ENCODE measurements at regions of chr2 and their contacts with region 1.

Region 1: DNA sequence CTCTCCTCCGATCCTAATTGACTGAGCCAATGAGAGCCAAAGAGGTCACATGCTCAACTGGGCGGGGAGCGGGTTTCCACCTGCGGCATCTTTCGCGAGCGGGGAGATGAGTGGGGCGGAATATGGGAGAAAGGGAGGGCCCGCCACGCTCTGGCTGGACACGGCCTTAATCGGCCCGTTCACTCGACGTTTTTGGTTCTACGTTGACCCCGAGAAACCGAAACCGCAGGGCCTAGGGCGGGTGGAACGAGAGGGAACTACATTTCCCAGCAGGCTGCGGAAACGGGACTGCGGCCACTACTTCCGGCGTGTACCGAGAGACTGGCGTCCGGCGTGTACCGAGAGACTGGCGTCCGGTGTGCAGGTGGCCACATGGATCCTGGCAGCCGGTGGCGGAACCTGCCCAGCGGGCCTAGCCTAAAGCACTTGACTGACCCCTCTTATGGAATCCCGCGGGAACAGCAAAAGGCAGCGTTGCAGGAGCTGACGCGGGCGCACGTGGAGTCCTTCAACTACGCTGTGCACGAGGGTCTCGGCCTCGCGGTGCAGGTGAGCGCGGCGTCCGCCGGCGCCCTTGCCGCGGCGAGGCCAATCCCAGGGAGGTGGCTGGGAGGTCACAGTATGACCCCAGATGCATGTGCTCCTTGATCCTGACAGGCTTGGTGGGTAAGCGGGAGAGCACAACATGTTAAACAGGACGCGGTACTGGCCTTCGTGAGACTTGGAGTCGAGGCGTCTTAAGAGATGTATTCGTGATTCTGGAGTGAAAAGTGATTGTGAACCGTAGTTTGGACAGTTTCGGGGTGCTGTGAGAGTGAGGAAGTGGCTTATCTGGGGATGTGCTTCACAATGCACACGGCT is at the start of gene POLR1B:
- DNase-seq: peak in 8 of 9 experiments; percentile 56 to 86 (median 75)
- ATAC-seq: peak; percentile 78
- H3K4me3 ChIP-seq: peak within 1 kb of the TSS; percentile 90
- H3K4me3 Mint-ChIP-seq: no peak within 1 kb of the TSS
- H3K27ac ChIP-seq: peak within 1 kb of the TSS; percentile 90 to 96
- H3K27ac Mint-ChIP-seq: no peak within 1 kb of the TSS
- H3K4me1 ChIP-seq: peaks cover 17% of the 10 kb centered on the region
- H3K4me1 Mint-ChIP-seq: peaks cover 26% of the 10 kb centered on the region
- H3K27me3 ChIP-seq: no peaks in the 10 kb centered on the region
- H3K27me3 Mint-ChIP-seq: no peaks in the 10 kb centered on the region
- CTCF ChIP-seq: no peak
- total RNA-seq, gene POLR1B: 10.0 to 11.0 TPM

Region 2: GRCh38 chr2:111883661-111884591 is 658.4 kb before region 1 on chr2 and contains the start of gene ANAPC1:
- CTCF ChIA-PET with region 1: no interaction called
- POLR2A ChIA-PET with region 1: no interaction called
- intact Hi-C with region 1: loop called (anchors 2 to 5 kb)
- DNase-seq: peak; percentile 69 to 91 (median 86)
- ATAC-seq: peak; percentile 96
- H3K4me3 ChIP-seq: peak within 1 kb of the TSS; percentile 75 to 82
- H3K4me3 Mint-ChIP-seq: peak within 1 kb of the TSS; percentile 96
- H3K27ac ChIP-seq: peak within 1 kb of the TSS; percentile 76 to 81
- H3K27ac Mint-ChIP-seq: peak within 1 kb of the TSS; percentile 98
- H3K4me1 ChIP-seq: peaks cover 8% of the 10 kb centered on the region
- H3K4me1 Mint-ChIP-seq: peaks cover 14% of the 10 kb centered on the region
- H3K27me3 ChIP-seq: no peaks in the 10 kb centered on the region
- H3K27me3 Mint-ChIP-seq: no peaks in the 10 kb centered on the region
- CTCF ChIP-seq: no peak
- total RNA-seq, gene ANAPC1: 39.6 to 43.9 TPM

Region 3: DNA sequence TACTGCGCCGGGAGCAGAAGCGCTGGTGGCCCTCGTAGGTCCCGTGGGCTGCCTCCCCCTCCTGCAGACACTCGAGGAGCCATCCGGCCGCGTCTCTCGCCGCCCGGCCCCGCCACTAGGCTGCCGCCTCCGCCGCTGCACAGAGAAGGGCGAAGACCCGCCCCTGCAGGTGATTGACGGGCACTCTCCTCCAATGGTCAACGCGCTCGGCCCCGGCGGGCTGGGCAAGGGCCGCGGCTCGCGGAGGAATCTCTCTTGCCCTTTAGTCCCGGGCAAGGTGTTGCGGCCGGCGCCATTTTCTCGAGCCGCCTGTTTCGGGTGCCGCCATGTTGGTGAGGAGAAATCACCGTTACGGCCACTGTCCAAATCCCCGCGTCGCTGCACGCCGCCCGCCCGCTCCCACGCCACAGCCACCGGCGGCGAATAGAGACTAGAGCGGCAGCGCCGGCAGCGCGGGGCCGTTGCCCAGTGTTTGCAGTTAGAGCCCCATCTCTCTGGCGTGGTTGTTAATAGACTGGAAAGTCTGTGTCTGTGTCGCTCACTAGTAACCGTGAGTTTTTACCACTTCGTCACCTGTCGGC is 267.0 kb before region 1 on chr2 and contains the start of gene ZC3H6:
- CTCF ChIA-PET with region 1: no interaction called
- POLR2A ChIA-PET with region 1: no interaction called
- intact Hi-C with region 1: loop called (anchors 5 kb)
- DNase-seq: peak; percentile 98 to 100 (median 100)
- ATAC-seq: peak; percentile 90
- H3K4me3 ChIP-seq: peak within 1 kb of the TSS; percentile 74 to 100
- H3K4me3 Mint-ChIP-seq: peak within 1 kb of the TSS; percentile 95
- H3K27ac ChIP-seq: peak within 1 kb of the TSS; percentile 96 to 100
- H3K27ac Mint-ChIP-seq: peak within 1 kb of the TSS; percentile 100
- H3K4me1 ChIP-seq: peaks cover 19% of the 10 kb centered on the region
- H3K4me1 Mint-ChIP-seq: peaks cover 26% of the 10 kb centered on the region
- H3K27me3 ChIP-seq: no peaks in the 10 kb centered on the region
- H3K27me3 Mint-ChIP-seq: no peaks in the 10 kb centered on the region
- CTCF ChIP-seq: peak; percentile 16
- total RNA-seq, gene ZC3H6: 13.7 to 15.1 TPM

Region 4: GRCh38 chr2:112529757-112530156 is 12.6 kb before region 1 on chr2:
- CTCF ChIA-PET with region 1: no interaction called
- POLR2A ChIA-PET with region 1: no interaction called
- intact Hi-C with region 1: no loop called
- DNase-seq: no peak
- ATAC-seq: no peak
- H3K4me3 ChIP-seq: no peak overlapping the region
- H3K4me3 Mint-ChIP-seq: no peak overlapping the region
- H3K27ac ChIP-seq: no peak overlapping the region
- H3K27ac Mint-ChIP-seq: no peak overlapping the region
- H3K4me1 ChIP-seq: no peaks in the 10 kb centered on the region
- H3K4me1 Mint-ChIP-seq: no peaks in the 10 kb centered on the region
- H3K27me3 ChIP-seq: no peaks in the 10 kb centered on the region
- H3K27me3 Mint-ChIP-seq: no peaks in the 10 kb centered on the region
- CTCF ChIP-seq: no peak

Region 5: GRCh38 chr2:112584134-112584890 is 42.0 kb after region 1 on chr2 and contains the start of gene CHCHD5:
- CTCF ChIA-PET with region 1: no interaction called
- POLR2A ChIA-PET with region 1: no interaction called
- intact Hi-C with region 1: loop called (anchors 1 kb)
- DNase-seq: peak; percentile 85 to 97 (median 92)
- ATAC-seq: peak; percentile 84
- H3K4me3 ChIP-seq: peak within 1 kb of the TSS; percentile 79 to 96
- H3K4me3 Mint-ChIP-seq: peak within 1 kb of the TSS; percentile 95
- H3K27ac ChIP-seq: peak within 1 kb of the TSS; percentile 75 to 95
- H3K27ac Mint-ChIP-seq: peak within 1 kb of the TSS; percentile 94
- H3K4me1 ChIP-seq: peaks cover 24% of the 10 kb centered on the region
- H3K4me1 Mint-ChIP-seq: peaks cover 35% of the 10 kb centered on the region
- H3K27me3 ChIP-seq: no peaks in the 10 kb centered on the region
- H3K27me3 Mint-ChIP-seq: no peaks in the 10 kb centered on the region
- CTCF ChIP-seq: no peak
- total RNA-seq, gene CHCHD5: 12.0 to 15.5 TPM

Region 6: DNA sequence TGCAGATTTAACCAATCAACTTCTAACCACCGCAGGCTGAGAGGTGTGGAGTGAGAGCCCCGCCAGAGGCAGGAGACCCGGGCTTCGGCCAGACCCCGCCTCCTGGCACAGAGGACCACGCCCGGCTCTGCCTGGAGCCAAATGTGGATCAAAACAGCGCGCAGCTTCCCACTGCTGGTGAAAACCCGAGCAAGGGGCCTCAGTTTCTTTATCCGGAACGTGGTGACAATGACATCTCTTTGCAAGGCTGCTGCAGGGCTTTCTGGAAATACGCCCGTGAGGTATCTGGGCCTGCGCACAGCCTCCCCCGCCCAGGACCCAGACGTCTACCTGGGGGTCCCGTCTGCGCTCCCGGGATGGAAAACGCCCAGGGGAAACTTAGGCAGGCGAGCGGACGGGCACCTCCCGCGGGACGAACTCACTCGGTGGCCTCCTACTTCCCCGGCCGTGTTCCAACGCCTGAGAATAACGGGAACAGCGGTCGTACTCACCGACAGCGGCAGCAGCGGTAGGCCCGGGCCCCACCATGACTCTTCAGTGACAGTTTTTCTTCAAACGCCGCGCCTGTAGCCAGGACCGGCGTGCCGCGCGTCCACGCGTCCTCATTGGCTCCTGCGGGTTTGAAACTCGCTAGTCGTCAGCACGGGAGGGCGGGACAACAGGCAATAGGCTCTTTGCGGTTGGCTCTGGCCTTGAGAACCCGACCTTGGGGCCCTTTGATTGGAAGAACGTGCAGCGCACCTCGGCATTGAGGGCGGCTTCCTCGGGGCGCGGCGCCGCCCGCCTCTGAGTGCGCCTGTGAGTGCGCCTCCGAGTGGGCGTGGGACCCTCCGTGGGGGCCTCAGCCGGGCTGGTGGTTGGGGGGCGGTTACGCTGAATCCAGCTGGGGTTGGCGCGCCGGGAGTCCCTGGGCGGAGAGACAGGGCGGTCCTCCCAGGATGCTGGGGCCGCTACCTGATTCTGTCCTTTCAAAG is 222.0 kb after region 1 on chr2 and contains the start of gene CKAP2L:
- CTCF ChIA-PET with region 1: no interaction called
- POLR2A ChIA-PET with region 1: no interaction called
- intact Hi-C with region 1: loop called in 1 of 2 experiments (anchors 1 kb)
- DNase-seq: peak; percentile 85 to 98 (median 94)
- ATAC-seq: peak; percentile 98
- H3K4me3 ChIP-seq: peak within 1 kb of the TSS; percentile 72 to 74
- H3K4me3 Mint-ChIP-seq: peak within 1 kb of the TSS; percentile 92
- H3K27ac ChIP-seq: peak within 1 kb of the TSS; percentile 5 to 54
- H3K27ac Mint-ChIP-seq: peak within 1 kb of the TSS; percentile 70
- H3K4me1 ChIP-seq: peaks cover 12% of the 10 kb centered on the region
- H3K4me1 Mint-ChIP-seq: peaks cover 27% of the 10 kb centered on the region
- H3K27me3 ChIP-seq: no peaks in the 10 kb centered on the region
- H3K27me3 Mint-ChIP-seq: no peaks in the 10 kb centered on the region
- CTCF ChIP-seq: no peak
- total RNA-seq, gene CKAP2L: 0.50 to 0.57 TPM